ENCODE measurements at regions of chr1 and their contacts with region 1.

Region 1: DNA sequence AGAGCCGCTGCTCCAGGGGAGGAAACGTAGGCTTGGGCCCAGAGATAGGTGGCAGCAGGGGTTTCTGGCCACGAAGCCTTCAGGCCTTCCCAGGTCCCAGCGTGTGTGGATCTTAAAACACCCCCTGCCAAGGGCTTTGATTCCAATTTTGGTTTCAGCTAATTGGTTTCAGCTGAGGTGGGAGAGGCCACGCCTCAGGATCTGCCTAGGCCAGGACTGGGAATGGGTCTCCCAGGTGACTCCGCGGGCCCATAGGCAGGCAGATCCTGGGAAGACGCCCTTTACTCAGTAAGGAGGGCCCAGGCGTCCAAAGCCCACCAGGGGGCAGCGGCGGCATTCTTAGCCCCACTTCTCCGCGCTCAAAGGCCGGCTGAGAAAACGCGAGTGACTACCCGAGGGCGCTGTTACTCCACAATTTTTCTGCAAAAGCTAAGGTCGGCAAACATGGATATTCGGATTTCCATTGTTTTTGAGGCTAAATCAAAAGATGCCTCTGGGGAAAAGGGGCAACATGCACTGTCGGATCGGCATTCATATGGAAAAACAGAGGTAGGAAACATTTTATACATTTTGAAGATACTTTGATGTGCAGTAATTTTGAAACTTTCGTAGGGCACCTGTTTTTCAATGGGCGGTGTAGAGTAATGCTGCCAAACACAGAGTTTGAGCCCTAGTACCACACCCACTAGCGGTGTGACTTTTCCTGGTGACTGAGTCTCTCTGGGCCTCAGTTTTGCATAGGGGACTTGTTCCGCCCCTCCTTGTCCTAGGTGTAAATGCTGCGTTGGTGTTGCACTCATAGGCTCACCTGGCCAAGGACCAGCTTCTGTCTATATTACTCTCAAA is 31.8 kb upstream of the BCL10 start:
- DNase-seq: peak; percentile 89
- ATAC-seq: peak; percentile 95 to 99 (median 97)
- H3K4me3 ChIP-seq: peak overlapping the region in 1 of 10 donors; percentile 14
- H3K27ac ChIP-seq: peak overlapping the region in 1 of 10 donors; percentile 14
- H3K4me1 ChIP-seq: peaks cover 0 to 17% (median 8%) of the 10 kb centered on the region in 9 donors
- H3K27me3 ChIP-seq: peaks cover 0 to 11% (median 0%) of the 10 kb centered on the region in 7 donors
- CTCF ChIP-seq: peak; percentile 96 to 99 (median 98)

Region 2: DNA sequence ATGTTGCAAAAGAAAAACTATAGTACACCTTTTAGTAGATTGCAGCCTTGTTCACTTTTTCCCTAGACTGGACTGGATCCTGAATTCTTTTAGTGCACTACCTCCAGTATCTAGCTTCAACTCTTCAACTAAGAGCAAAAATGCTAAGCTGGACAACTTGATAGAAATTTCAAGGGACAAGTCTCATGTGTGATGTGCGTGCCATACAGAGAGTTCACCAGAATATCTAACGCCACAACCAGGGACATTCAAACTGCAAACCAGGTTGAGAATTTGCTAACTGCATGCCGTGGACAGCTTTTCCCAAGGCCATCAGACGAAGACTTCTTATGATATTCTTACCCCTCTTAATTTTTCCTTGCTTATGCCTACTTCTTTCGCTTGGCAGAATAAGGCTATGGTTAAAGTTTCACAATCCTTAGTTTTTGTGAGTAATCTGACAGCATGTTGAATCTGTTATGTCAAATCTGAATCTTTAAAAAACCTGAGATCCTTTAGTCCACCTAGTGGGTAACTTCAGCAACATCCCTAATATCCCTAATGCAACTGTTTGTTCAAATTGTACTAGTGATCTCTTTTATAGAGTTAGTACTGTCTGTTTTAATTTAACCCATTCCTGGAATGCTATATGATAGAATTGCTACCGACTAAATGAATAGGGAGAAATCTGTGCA is 90.3 kb after region 1 on chr1:
- intact Hi-C with region 1: loop called in 9 of 10 experiments (anchors 1 to 10 kb)
- DNase-seq: no peak
- ATAC-seq: peak in 4 of 8 donors; percentile 40 to 56 (median 45)
- H3K4me3 ChIP-seq: no peak overlapping the region
- H3K27ac ChIP-seq: peak overlapping the region in 1 of 10 donors; percentile 12
- H3K4me1 ChIP-seq: peaks cover 0 to 16% (median 0%) of the 10 kb centered on the region in 9 donors
- H3K27me3 ChIP-seq: no peaks in the 10 kb centered on the region
- CTCF ChIP-seq: peak; percentile 19 to 62 (median 36)

Region 3: GRCh38 chr1:85464497-85465098 is 156.4 kb after region 1 on chr1:
- intact Hi-C with region 1: loop called in 2 of 10 experiments (anchors 10 kb)
- DNase-seq: peak; percentile 55 to 74
- ATAC-seq: peak; percentile 74 to 91 (median 87)
- H3K4me3 ChIP-seq: peak overlapping the region; percentile 31 to 90 (median 70)
- H3K27ac ChIP-seq: peak overlapping the region; percentile 26 to 89 (median 77)
- H3K4me1 ChIP-seq: peaks cover 0 to 20% (median 14%) of the 10 kb centered on the region in 9 donors
- H3K27me3 ChIP-seq: peaks cover 0 to 31% (median 0%) of the 10 kb centered on the region in 7 donors
- CTCF ChIP-seq: peak in 1 of 9 donors; percentile 0

Region 4: DNA sequence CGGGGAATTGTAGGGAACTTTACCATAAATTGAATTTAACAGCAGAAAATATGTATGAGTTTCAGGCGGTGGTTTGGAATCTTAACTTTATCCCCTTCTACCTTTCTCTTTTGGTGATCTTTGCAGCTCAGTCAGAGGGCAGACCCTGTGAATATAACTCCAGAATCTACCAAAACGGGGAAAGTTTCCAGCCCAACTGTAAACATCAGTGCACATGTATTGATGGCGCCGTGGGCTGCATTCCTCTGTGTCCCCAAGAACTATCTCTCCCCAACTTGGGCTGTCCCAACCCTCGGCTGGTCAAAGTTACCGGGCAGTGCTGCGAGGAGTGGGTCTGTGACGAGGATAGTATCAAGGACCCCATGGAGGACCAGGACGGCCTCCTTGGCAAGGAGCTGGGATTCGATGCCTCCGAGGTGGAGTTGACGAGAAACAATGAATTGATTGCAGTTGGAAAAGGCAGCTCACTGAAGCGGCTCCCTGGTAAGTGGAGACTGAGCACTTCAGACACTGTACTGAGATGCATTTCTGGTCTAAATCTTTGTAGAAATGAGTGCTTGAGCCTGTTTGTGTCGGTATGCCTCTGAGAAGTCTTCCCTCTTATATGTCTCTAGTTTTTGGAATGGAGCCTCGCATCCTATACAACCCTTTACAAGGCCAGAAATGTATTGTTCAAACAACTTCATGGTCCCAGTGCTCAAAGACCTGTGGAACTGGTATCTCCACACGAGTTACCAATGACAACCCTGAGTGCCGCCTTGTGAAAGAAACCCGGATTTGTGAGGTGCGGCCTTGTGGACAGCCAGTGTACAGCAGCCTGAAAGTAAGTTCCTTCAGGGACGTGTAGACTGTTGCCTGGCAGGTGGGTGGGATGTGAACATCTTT is 273.8 kb after region 1 on chr1:
- intact Hi-C with region 1: loop called in 9 of 10 experiments (anchors 2 to 10 kb)
- DNase-seq: peak in 1 of 2 donors; percentile 38
- ATAC-seq: peak in 4 of 8 donors; percentile 12 to 24 (median 20)
- H3K4me3 ChIP-seq: peak overlapping the region; percentile 63 to 93 (median 78)
- H3K27ac ChIP-seq: peak overlapping the region; percentile 71 to 100 (median 98)
- H3K4me1 ChIP-seq: peaks cover 7 to 61% (median 51%) of the 10 kb centered on the region in 9 donors
- H3K27me3 ChIP-seq: peaks cover 0 to 53% (median 0%) of the 10 kb centered on the region in 7 donors
- CTCF ChIP-seq: peak in 7 of 9 donors; percentile 10 to 47 (median 32)

Region 5: DNA sequence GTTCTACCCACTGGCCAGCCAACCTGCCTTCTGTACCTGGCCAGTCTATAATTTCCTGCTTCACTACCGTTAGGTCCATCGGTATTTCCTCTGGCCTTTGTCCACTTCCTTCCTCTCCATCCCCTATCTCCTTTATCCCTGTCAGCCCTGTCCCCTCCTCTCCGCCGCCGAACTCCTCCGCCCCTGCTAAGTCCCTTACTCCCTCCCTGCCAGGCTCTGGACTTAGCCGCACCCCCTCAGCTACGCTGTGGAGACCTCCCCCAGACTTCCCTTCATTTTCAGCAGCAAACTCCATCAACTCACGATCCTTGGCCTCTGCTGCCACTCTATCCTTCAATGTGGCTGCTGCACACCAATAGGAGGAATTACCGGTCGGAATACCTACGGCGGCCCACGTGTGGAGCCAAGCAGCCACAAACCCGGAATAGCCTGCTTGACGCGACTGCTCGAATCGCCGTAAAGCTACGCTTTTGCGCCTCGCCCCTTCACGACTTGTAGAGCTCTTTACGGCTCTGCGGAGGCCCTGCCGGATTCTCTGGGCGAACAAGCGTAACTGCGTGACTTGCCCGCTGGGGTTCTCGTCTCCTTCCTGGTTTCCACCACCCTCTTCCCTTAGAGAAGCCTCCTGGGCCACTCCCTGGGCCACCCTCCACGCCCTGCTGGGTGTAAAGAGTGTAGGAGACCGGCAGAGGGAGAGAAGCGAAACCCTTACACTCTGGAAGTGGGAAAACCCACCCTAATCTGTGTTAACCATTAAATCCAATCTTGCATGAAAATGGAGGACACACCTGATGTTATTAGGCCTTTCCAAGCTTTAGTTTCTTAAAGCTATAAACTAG is 400.0 kb after region 1 on chr1 and contains the start of gene ZNHIT6:
- intact Hi-C with region 1: loop called in 1 of 10 experiments (anchors 5 kb)
- DNase-seq: peak; percentile 83 to 92
- ATAC-seq: peak; percentile 88 to 98 (median 97)
- H3K4me3 ChIP-seq: peak within 1 kb of the TSS; percentile 62 to 91 (median 77)
- H3K27ac ChIP-seq: peak within 1 kb of the TSS; percentile 73 to 98 (median 90)
- H3K4me1 ChIP-seq: peaks cover 0 to 26% (median 16%) of the 10 kb centered on the region in 9 donors
- H3K27me3 ChIP-seq: no peaks in the 10 kb centered on the region
- CTCF ChIP-seq: peak in 7 of 9 donors; percentile 18 to 47 (median 44)
- total RNA-seq, gene ZNHIT6: 8.7 to 12.8 (median 10.5) TPM

Region 6: DNA sequence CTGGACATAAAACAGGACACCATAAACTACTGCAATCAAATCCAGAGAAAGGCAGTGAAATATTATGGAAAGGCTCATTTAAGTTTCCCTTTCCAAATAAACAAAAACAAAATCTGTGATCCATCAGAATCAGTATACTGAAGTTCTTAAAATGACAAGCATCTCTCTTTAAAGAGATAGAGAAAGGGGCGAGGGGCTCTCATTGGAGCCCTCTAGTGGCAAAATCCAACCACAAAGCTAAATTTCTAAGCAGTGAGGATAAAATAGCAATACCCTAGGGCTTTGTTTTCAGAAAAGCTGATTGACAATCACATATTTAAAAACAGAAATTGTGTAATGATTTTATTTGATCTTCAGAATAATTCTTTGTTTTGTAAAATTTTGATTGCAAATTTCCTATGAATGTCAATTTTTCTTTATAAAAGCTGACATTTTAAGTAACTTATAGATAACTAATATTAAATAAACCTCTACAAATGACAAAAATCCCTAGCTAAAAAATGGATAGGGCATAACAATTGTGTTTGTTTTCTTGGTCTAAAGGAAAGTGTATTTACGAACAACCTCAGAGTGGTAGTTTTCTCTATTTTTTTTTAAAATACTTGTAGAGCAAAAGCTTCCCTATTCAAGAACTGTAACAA is 710.2 kb after region 1 on chr1:
- intact Hi-C with region 1: loop called in 3 of 10 experiments (anchors 5 to 10 kb)
- DNase-seq: no peak
- ATAC-seq: no peak
- H3K4me3 ChIP-seq: no peak overlapping the region
- H3K27ac ChIP-seq: no peak overlapping the region
- H3K4me1 ChIP-seq: no peaks in the 10 kb centered on the region
- H3K27me3 ChIP-seq: no peaks in the 10 kb centered on the region
- CTCF ChIP-seq: peak in 8 of 9 donors; percentile 34 to 80 (median 69)

Measured in heart right ventricle (tissue), 16 donors.